ENCODE measurements at regions of chr17 and their contacts with region 1.

Region 1: DNA sequence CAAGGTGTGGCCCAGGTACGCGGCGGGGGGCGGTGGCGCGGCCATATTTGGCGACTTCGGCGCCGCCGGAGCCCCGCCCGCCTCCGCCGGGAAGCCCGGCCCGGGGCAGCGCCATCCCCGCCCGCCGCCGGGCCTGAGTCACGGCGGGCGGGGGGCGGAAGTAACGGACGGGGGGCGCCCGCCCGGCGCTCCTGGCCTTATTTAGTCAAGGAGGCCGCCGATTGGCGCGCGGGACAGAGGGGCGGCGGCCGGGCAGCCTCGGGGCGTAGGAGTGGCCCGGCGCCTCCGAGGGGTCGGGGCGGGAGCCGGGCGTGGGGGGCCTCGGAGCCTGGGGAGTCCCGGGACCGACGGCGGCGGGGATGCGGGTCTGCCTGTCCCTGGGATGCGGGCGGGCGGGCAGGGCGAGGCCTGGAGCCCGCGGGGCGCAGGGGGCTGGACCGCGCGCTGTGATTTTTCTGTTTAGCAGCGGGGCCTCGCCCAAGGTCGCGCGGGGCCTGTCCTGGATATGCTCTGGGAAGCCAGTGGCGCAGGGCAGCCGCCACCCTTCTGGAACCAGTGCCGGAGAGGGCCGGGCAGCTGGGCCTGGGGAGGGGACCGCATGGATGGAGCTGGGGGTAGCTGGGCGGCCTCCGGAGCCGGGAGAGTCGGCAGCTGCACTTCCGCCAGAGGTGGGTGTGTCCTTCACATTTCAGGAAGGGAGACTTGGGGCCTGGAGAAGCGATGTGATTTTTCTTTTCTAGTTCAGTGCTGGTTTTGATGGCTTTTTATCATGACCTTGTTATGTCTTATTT is 2.3 kb upstream of the ACTG1 start:
- DNase-seq: peak; percentile 87 to 94
- H3K4me3 ChIP-seq: peak overlapping the region; percentile 92 to 99
- H3K27ac ChIP-seq: peak overlapping the region; percentile 97 to 100
- H3K4me1 ChIP-seq: peaks cover 0 to 51% (median 39%) of the 10 kb centered on the region in 4 donors
- H3K27me3 ChIP-seq: no peaks in the 10 kb centered on the region
- CTCF ChIP-seq: no peak

Region 2: GRCh38 chr17:81401723-81402529 is 113.0 kb before region 1 on chr17:
- intact Hi-C with region 1: loop called (anchors 2 kb)
- DNase-seq: peak in 1 of 2 donors; percentile 79
- H3K4me3 ChIP-seq: peak overlapping the region; percentile 86 to 92
- H3K27ac ChIP-seq: peak overlapping the region; percentile 95 to 99
- H3K4me1 ChIP-seq: peaks cover 5 to 63% (median 57%) of the 10 kb centered on the region in 4 donors
- H3K27me3 ChIP-seq: no peaks in the 10 kb centered on the region
- CTCF ChIP-seq: peak in 1 of 2 experiments; percentile 28

Region 3: DNA sequence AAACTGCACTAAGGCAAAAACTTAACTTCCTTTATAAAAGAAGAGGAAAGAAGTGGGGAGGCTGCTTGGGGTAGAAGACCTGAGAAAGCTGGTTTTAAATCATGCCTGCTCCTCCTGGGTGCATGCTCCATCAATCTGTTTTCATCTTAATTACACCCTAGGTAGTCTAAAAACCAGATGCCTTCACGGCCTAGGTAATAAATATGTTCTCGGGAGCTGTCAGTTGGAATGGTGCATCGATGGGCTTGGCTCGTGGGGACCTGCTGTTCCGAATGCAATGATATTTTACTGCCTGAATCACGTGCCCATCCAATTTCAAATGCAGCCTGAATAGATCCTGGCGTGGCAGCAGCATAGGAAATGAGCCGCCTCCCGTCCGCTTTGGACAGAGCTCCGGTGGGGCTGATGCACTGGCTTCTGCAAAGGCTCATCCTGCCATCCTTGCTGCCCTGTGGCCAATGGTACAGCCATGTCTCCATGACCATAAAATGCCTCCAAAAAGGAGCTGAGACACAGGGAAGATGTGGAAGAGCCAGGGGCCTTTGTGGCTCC is 56.0 kb after region 1 on chr17:
- intact Hi-C with region 1: loop called (anchors 2 kb)
- DNase-seq: no peak
- H3K4me3 ChIP-seq: no peak overlapping the region
- H3K27ac ChIP-seq: no peak overlapping the region
- H3K4me1 ChIP-seq: peaks cover 0 to 40% (median 32%) of the 10 kb centered on the region in 4 donors
- H3K27me3 ChIP-seq: no peaks in the 10 kb centered on the region
- CTCF ChIP-seq: no peak

Region 4: GRCh38 chr17:81601525-81602120 is 86.7 kb after region 1 on chr17:
- intact Hi-C with region 1: loop called (anchors 5 kb)
- DNase-seq: peak in 1 of 2 donors; percentile 30
- H3K4me3 ChIP-seq: no peak overlapping the region
- H3K27ac ChIP-seq: no peak overlapping the region
- H3K4me1 ChIP-seq: peaks cover 0 to 17% (median 9%) of the 10 kb centered on the region in 4 donors
- H3K27me3 ChIP-seq: no peaks in the 10 kb centered on the region
- CTCF ChIP-seq: peak; percentile 77 to 86